GM10248 (cell line): ENCODE measurements at regions of chr3 and their contacts with region 1.

Region 1: DNA sequence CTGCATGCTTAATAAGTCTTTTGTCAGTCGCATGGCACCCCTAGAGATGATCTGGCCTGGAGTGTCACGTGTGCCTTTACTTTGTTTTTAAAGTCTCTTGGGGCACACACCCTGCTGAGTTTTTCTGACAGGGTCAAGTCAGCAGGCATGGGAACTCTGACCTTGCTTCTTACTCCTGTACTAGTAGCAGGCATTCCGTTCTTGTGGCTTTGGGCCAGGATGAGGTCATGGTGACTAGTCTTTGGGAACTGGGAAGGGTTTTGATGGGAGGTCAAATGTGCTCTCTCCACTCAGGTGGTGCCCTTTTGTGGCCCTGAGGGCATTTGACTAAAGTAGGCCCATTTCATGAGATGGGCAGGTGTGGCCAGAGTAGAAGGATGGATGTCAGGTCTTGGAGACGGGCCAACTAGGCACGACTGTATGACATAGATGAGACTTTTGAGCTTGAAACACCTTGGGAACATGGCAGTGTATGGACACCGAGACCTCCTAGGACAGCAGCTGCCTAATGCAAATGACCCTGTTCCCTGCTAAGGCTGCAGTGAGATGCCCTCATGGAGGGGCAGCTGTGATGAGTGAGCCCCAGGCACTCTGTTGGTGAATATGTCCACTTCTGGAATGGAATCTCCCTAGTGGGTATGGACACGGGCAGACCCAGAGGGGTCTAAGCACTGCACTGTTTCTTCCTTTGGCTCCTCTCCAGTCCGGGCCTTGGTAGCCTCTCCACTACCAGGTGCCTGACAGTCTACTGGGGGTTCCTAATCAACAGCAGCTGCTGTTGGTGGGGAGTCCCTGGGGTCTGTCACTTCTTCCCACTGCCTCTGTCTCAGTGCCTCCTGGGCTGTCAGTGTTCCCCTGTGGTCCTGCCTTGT is 16.4 kb downstream of the SRPRB start:
- DNase-seq: no peak
- CTCF ChIP-seq: no peak

Region 2: DNA sequence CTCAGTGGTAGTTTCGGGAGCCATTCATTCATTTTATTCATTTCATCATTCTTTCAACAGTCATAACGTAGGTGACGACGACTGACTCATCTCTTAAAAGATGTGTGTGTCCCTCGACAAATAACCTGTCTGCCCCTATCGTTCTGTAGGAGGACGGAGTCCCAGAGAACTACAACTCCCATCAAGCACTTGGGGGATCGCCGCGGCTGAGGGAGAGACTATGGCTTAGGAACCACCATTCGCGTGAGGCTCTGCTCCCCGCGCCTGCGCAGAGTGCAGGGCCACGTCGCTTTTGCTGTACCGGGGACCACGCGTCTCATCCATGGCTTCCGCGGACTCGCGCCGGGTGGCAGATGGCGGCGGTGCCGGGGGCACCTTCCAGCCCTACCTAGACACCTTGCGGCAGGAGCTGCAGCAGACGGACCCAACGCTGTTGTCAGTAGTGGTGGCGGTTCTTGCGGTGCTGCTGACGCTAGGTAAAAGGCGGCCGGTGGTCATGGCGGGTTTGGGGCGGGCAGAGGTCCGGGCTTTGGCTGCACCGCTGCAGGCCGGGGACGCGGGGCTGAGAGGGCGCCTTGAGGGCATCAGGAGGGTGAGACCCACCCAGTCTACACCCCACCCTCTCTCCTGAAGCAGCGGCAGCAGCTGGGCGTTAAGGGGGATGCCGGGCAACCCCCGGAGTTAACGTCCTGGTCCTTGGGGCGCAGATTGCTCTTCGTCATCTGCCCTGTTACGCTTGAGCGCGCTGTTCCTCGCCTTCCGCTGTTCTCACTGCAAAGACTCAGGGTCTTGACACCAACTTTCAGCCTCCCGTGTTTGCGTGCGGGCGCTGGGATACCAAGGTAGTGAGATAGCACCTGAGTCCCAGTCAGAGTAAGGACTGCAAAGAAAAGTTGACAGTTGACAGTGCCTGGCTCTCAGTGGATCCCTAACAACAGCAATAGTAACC is 16.2 kb before region 1 on chr3 and contains the start of gene SRPRB:
- CTCF ChIA-PET with region 1: interaction called, 10 read pairs
- POLR2A ChIA-PET with region 1: interaction called, 4 read pairs
- DNase-seq: peak; percentile 98
- CTCF ChIP-seq: no peak

Region 3: DNA sequence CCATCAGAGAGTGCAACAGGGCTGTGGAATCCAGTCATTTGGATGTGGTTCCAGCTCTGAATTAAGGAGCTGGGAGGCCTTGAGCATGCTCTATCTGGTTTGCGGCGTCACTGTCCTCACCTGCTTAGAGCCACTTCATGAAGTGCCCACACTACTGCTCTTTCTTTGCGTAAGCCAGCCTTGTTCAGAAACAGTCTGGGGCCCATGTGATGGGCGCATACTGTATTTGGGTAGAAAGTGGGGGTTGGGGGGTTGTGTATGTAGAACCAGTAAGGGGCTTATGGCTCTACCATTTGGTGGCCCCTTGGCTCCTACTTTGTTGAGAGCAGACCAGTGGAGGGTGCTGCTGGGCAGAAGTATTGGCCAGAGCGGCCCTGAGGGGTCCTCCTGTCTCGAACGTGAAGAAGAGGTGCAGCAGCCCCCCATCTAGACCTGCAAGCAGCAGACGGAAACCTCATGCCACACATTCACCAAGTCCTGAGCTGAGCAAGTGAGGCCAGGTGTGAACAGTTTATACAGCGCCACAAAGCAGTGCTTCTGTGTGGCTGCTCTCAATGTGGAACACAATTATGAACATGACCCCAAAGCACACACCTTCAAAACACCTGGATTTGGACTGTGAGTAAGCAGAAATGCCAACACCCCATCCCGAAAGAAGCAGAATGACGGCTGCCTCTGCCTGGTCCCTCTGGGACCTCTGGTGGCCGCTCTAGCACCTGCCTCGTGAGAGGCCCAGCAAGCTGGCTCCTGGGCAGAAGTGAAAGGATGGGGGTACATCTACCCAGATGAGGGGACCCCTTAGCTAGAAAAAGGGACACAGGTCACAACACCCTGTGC is 10.2 kb after region 1 on chr3:
- CTCF ChIA-PET with region 1: interaction called, 14 read pairs
- POLR2A ChIA-PET with region 1: interaction called, 3 read pairs
- DNase-seq: no peak
- CTCF ChIP-seq: peak; percentile 19

Region 4: GRCh38 chr3:133930341-133930933 is 108.4 kb after region 1 on chr3:
- CTCF ChIA-PET with region 1: interaction called, 11 read pairs
- POLR2A ChIA-PET with region 1: no interaction called
- DNase-seq: no peak
- CTCF ChIP-seq: peak; percentile 56